Activated T-helper 1 cell treated with anti-CD3 and anti-CD28 coated beads, Interleukin-12 subunit alpha, Interleukin-12 subunit beta, Interleukin-2, Interleukin-4 antibody, amounts not matched to agents 30 ng/mL and 10 ng/mL and 1 ng/mL, durations not matched to agents 14 hours and 24 hours and 36 hours (primary cell): ENCODE measurements at regions of chr10 and their contacts with region 1.

Region 1: DNA sequence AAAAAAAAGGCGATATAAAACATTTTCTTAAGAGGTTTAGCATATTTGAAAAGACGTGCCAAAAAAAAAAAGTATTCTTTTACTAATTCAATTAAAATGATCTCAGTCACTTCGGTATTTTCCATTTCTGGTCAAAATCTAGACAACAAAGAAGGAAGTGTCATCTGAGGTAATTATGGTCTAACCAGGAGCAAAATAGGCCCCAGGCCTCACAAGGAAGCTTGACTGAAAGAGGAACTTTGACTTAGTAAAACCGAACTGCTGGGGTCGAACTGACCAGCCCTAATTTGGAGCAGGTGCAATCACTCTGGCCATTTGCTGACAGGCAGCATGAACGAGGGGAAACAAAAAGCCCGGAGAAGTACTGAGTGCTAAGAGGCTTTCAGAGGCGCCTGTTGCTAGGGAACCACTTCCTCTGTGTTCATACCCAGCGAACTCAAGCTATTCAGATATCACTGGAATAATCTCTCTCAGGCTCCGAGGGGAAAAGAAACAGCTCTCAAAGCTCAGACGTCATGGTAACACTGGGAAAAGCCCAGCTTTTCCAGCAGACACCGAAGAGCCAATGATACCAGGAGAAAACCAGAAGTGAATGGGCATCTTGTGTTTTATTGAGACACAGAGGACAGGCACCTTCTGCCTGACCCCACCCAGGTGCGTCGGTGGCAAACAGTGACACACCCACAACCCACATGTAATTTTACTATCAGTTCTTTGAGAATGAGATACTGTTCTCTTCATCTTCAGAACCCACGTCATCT is 126.5 kb downstream of the FAM107B start:
- DNase-seq: peak; percentile 67
- H3K4me3 Mint-ChIP-seq: peak overlapping the region; percentile 73
- H3K27ac Mint-ChIP-seq: peak overlapping the region; percentile 98
- H3K4me1 Mint-ChIP-seq: peaks cover 61% of the 10 kb centered on the region
- H3K27me3 Mint-ChIP-seq: no peaks in the 10 kb centered on the region

Region 2: DNA sequence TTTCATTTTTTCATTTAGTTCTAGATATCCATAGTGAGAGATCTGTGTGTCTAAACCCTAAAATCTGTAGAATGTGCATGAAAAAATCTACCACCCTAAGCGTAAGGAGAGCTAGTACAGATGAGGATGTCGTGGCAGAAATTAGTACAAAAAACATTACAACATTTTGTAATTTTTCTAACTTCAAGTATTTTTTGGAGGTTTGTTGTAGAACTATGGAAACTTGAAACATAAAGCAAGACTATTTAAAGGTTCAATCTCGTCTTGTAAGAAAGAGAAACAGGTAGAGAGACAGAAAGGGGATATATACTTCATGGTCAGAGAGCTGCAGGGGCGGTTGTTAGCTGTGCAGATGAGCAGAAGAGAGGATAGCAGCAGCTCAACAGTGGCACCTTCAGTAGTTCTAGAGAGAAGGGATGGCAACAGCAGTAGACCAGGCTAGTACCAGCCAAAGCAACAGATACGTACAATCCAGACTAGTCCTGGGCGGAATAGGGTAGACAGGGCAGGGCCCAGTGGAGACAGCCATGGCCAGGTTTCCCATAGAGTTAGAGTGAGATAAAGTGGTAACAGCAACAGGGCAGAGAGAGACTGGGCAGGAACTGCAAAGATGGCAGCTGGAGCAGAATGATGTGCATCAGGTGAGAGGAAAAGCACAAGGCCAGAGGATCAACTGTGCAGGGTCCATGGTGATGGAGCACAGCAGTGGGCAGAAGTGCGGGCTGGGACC is 462.7 kb before region 1 on chr10:
- intact Hi-C with region 1: loop called (anchors 1 kb)
- DNase-seq: peak; percentile 52
- H3K4me3 Mint-ChIP-seq: peak overlapping the region; percentile 46
- H3K27ac Mint-ChIP-seq: peak overlapping the region; percentile 92
- H3K4me1 Mint-ChIP-seq: peaks cover 20% of the 10 kb centered on the region
- H3K27me3 Mint-ChIP-seq: peaks cover 48% of the 10 kb centered on the region

Region 3: DNA sequence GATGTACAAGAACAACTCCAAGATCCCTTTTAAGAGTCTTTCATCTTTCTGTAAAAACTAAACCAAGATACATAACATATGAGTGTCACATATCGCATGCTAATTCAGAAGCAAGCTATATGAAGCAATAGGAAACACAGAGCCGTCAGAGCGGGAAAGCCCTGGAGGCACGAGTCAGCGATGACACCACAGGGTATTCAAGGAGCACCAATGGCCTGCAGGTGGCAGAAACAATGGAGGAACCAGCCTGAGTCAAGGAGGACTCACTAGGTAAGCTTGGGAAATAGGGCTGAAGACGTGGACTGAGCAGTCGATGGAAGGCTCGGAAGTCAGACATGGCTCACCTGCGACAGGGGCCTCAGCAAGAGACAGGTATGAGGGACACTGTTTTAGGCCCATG is 87.9 kb before region 1 on chr10:
- intact Hi-C with region 1: loop called (anchors 1 kb)
- DNase-seq: peak; percentile 59
- H3K4me3 Mint-ChIP-seq: peak overlapping the region; percentile 41
- H3K27ac Mint-ChIP-seq: peak overlapping the region; percentile 95
- H3K4me1 Mint-ChIP-seq: peaks cover 97% of the 10 kb centered on the region
- H3K27me3 Mint-ChIP-seq: no peaks in the 10 kb centered on the region

Region 4: DNA sequence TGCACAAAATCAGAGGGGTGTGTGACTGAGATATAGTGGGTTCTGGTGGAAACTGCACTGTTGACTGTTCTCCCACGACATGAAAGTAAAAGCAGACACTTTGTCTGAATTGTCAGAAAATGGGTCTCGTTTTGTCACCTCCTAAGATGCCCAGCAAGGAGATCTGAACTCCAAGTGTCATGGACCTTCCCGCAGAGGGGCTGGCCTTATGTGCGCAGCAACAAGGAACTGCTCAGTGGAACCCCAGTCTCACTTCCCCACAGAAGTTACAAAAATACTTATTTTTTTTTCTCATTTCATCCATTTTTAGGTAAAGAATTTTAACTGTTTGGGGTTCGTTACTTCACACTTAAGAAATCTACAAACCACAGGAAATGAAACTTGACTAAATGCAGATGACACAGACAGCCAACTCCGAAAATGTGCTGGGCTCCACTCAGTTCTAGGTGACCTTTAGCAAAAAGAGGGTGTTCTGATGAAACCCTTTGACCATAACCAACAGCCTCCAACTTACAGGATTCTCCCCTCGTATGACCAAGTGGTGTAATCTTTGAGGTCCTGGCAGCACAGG is 11.5 kb after region 1 on chr10:
- intact Hi-C with region 1: loop called (anchors 1 kb)
- DNase-seq: peak; percentile 59
- H3K4me3 Mint-ChIP-seq: peak overlapping the region; percentile 46
- H3K27ac Mint-ChIP-seq: peak overlapping the region; percentile 92
- H3K4me1 Mint-ChIP-seq: peaks cover 81% of the 10 kb centered on the region
- H3K27me3 Mint-ChIP-seq: no peaks in the 10 kb centered on the region

Region 5: DNA sequence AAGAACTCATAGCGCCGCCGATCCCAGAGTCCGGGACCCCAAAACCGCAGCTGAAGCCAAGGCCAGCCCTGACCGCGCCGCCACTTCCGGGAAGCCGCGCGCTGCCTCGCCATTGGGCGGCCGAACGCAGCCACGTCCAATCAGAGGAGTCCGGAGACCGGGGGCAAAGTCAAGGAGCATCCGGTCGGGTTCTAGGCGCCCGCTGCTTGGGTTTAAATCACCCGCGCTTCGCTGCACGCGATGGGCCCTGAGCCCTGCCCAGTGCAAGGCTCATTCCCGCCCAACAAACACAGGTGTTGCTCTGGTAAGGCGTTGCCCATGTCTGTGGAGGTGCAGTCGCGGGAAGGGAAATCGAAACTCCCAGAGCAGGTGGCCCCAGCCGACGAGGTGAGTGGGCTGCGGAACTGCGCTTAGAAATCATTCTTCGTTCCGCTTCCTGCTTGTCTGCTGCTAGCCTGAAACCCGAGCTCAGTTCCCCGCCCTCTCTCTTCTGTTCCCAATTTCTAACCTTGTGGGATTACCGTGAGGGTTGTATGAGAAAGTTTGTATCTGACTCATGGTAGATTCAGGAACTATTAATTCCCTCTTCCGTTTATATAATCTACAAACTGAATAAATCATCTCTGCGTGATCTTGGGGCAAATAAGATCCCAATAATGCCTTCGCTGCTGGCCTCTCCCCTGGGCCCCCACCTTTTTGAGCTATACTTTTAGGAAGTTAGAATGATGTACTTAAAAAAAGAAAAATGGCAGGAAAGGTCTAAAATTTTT is 306.0 kb after region 1 on chr10 and contains the start of gene DCLRE1C:
- intact Hi-C with region 1: loop called (anchors 5 kb)
- DNase-seq: peak; percentile 89
- H3K4me3 Mint-ChIP-seq: peak within 1 kb of the TSS; percentile 94
- H3K27ac Mint-ChIP-seq: peak within 1 kb of the TSS; percentile 95
- H3K4me1 Mint-ChIP-seq: peaks cover 57% of the 10 kb centered on the region
- H3K27me3 Mint-ChIP-seq: no peaks in the 10 kb centered on the region
- total RNA-seq, gene DCLRE1C: 15.5 and 20.9 TPM in 2 replicates